ENCODE measurements at regions of chr10 and their contacts with region 1.

Region 1: GRCh38 chr10:63256009-63256773 is 123.1 kb downstream of the NRBF2 start:
- DNase-seq: no peak
- ATAC-seq: no peak
- H3K4me3 ChIP-seq: no peak overlapping the region
- H3K4me3 Mint-ChIP-seq: peak overlapping the region in 1 of 3 donors; percentile 35
- H3K27ac ChIP-seq: no peak overlapping the region
- H3K27ac Mint-ChIP-seq: peak overlapping the region; percentile 53 to 66
- H3K4me1 ChIP-seq: peaks cover 21 to 35% of the 10 kb centered on the region in 2 experiments
- H3K4me1 Mint-ChIP-seq: peaks cover 87 to 90% (median 90%) of the 10 kb centered on the region in 3 donors
- H3K27me3 ChIP-seq: no peaks in the 10 kb centered on the region
- H3K27me3 Mint-ChIP-seq: no peaks in the 10 kb centered on the region

Region 2: DNA sequence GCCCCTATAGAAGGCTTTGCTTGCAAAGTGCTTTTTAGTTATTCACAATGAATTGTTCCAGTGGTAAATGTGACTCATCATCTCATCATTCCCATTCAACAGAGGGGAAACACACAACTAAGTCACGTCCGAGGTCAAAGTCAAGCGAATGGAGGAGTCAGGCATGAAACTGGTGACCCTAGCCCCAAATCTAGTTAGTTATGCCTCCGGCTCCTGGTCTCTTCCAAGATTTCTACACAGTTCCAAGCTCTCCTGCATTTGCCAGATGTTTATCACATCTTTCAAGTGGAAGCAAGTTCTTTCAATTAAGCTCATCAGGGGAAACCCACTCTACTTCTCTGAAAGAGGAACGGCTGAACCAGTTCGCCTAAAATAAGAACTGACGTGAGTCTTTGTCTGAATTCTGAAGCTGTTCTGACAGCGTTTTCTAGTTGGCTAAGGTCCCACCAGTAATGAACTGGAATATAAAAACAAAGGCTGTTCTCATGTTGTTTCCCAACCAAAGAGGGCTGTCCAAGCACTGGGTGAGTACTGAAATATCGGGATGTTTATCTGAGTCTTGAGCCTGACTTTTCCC is 264.0 kb before region 1 on chr10:
- CTCF ChIA-PET with region 1: no interaction called
- POLR2A ChIA-PET with region 1: no interaction called
- DNase-seq: no peak
- ATAC-seq: no peak
- H3K4me3 ChIP-seq: no peak overlapping the region
- H3K4me3 Mint-ChIP-seq: no peak overlapping the region
- H3K27ac ChIP-seq: no peak overlapping the region
- H3K27ac Mint-ChIP-seq: no peak overlapping the region
- H3K4me1 ChIP-seq: peaks cover 0 to 2% of the 10 kb centered on the region in 2 experiments
- H3K4me1 Mint-ChIP-seq: peaks cover 0 to 5% (median 0%) of the 10 kb centered on the region in 3 donors
- H3K27me3 ChIP-seq: no peaks in the 10 kb centered on the region
- H3K27me3 Mint-ChIP-seq: peaks cover 0 to 10% of the 10 kb centered on the region in 2 donors

Region 3: DNA sequence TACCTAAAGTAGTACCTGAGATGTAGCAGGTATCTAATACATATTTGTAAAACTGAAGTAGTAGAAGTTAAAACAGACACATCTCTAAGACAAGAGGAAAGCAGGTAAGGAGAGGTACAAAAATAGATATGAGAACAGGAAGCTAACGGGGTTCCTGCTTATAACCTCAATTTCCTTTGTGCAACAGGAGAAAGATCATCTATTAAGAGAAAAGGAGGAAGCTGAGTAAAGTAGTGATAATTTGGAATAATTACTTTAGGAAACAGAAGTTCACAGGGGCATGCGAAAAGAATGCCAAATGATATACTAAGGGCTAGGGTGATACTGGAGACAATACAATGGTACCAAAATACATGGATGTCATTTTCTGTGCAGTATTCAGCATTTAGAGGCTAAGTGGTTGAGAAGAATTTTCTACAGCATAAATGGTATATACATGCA is 14.3 kb before region 1 on chr10:
- CTCF ChIA-PET with region 1: interaction called in 1 of 2 experiments, 5 read pairs
- POLR2A ChIA-PET with region 1: interaction called, 9 to 21 read pairs
- DNase-seq: peak in 1 of 35 experiments; percentile 34
- ATAC-seq: peak; percentile 56 to 79 (median 68)
- H3K4me3 ChIP-seq: peak overlapping the region in 1 of 2 donors; percentile 23
- H3K4me3 Mint-ChIP-seq: peak overlapping the region; percentile 39 to 69 (median 66)
- H3K27ac ChIP-seq: peak overlapping the region; percentile 39
- H3K27ac Mint-ChIP-seq: peak overlapping the region; percentile 84 to 90
- H3K4me1 ChIP-seq: peaks cover 37 to 48% of the 10 kb centered on the region in 2 experiments
- H3K4me1 Mint-ChIP-seq: peaks cover 78 to 86% (median 81%) of the 10 kb centered on the region in 3 donors
- H3K27me3 ChIP-seq: no peaks in the 10 kb centered on the region
- H3K27me3 Mint-ChIP-seq: no peaks in the 10 kb centered on the region

Region 4: GRCh38 chr10:63441404-63441803 is 185.2 kb after region 1 on chr10:
- CTCF ChIA-PET with region 1: no interaction called
- POLR2A ChIA-PET with region 1: interaction called in 1 of 2 experiments, 13 read pairs
- DNase-seq: no peak
- ATAC-seq: no peak
- H3K4me3 ChIP-seq: no peak overlapping the region
- H3K4me3 Mint-ChIP-seq: no peak overlapping the region
- H3K27ac ChIP-seq: no peak overlapping the region
- H3K27ac Mint-ChIP-seq: no peak overlapping the region
- H3K4me1 ChIP-seq: peaks cover 0 to 13% of the 10 kb centered on the region in 2 experiments
- H3K4me1 Mint-ChIP-seq: peaks cover 30 to 35% (median 30%) of the 10 kb centered on the region in 3 donors
- H3K27me3 ChIP-seq: no peaks in the 10 kb centered on the region
- H3K27me3 Mint-ChIP-seq: no peaks in the 10 kb centered on the region

Region 5: DNA sequence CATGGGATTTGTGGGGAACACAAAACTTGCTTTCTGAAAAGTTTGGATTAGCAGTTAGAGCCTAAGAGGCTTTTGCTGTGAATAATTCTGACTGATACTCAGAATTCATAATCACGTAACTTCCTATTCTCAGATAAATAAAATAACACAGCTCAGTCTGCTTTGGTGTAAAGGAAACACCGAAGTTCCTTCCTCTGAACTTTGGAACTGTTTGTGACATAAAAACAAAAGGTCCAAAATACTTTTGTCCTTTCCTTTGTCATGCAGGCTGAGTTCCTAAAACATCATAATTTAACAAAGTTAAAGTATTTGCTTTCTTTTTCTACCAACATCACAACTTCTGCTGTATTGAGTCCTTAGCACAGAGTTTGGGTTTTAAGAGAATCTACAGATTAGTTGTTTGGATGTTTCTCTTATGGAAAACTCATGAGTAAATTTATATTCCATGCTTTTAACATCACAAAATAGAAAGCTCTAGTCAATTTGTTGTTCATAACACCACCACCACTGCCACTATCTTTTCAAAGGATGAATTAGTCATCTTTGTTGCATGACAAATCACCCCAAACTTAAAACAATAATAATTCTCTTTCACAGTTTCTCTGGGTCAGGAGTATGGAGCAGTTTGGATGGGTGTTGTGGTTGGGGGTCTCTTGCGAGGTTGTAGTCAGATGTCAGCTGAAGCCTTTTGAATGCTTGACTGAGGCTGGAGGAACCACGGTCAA is 388.4 kb after region 1 on chr10:
- CTCF ChIA-PET with region 1: no interaction called
- POLR2A ChIA-PET with region 1: no interaction called
- DNase-seq: no peak
- ATAC-seq: no peak
- H3K4me3 ChIP-seq: no peak overlapping the region
- H3K4me3 Mint-ChIP-seq: no peak overlapping the region
- H3K27ac ChIP-seq: no peak overlapping the region
- H3K27ac Mint-ChIP-seq: no peak overlapping the region
- H3K4me1 ChIP-seq: no peaks in the 10 kb centered on the region
- H3K4me1 Mint-ChIP-seq: peaks cover 0 to 7% (median 6%) of the 10 kb centered on the region in 3 donors
- H3K27me3 ChIP-seq: no peaks in the 10 kb centered on the region
- H3K27me3 Mint-ChIP-seq: no peaks in the 10 kb centered on the region